ENCODE measurements at regions of chrX and their contacts with region 1.

Region 1: DNA sequence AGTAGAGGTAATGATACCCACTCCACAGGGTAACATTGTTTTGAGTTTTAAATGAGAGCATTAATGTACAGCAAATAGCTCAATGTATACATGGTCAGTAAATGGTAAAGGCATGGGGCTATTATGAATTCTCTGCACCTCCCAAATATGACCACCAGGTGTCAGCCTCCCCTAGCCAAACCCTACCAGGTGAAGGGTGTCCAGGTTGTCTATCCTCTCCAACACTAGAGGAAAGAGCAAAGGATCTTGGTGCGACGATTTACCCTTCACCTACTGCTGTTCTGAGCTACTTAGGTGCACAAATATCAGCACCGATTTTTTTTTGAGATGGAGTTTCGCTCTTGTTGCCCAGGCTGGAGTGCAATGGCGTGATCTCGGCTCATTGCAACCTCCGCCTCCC is 26.5 kb upstream of the XIAP start:
- DNase-seq: peak; percentile 5 to 66
- H3K4me3 ChIP-seq: no peak overlapping the region
- H3K27ac ChIP-seq: no peak overlapping the region
- H3K4me1 ChIP-seq: no peaks in the 10 kb centered on the region
- H3K27me3 ChIP-seq: no peaks in the 10 kb centered on the region
- CTCF ChIP-seq: peak; percentile 34 to 70 (median 65)
- EP300 ChIP-seq: no peak
- POLR2A ChIP-seq: no peak
- RAD21 ChIP-seq: peak; percentile 88 to 93

Region 2: DNA sequence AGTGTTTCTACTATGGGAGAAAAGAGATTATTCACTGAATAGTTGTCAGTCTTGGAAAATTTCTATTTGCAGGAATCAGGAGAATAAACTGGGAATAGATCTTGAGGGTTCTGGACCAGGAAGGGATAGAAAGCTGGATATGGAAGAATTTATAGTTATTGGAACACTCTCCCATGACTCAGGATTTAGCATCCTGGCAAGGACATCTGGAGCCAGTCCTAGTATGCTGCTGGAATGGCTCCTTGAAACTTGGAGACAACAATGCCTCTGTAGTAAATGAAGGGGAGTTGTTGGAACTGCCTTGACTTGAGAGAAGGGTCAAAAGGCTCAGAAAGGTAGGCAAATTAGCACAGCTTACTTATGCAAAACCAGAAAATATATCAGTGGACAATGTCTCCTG is 77.1 kb before region 1 on chrX:
- CTCF ChIA-PET with region 1: no interaction called
- POLR2A ChIA-PET with region 1: no interaction called
- DNase-seq: no peak
- H3K4me3 ChIP-seq: no peak overlapping the region
- H3K27ac ChIP-seq: no peak overlapping the region
- H3K4me1 ChIP-seq: no peaks in the 10 kb centered on the region
- H3K27me3 ChIP-seq: no peaks in the 10 kb centered on the region
- CTCF ChIP-seq: no peak
- EP300 ChIP-seq: no peak
- POLR2A ChIP-seq: no peak
- RAD21 ChIP-seq: no peak

Region 3: GRCh38 chrX:123822965-123823364 is 10.4 kb before region 1 on chrX:
- CTCF ChIA-PET with region 1: interaction called, 17 read pairs
- POLR2A ChIA-PET with region 1: no interaction called
- DNase-seq: no peak
- H3K4me3 ChIP-seq: no peak overlapping the region
- H3K27ac ChIP-seq: no peak overlapping the region
- H3K4me1 ChIP-seq: peaks cover 0 to 8% (median 3%) of the 10 kb centered on the region in 4 experiments; a peak in 3 of 7 replicates
- H3K27me3 ChIP-seq: no peaks in the 10 kb centered on the region
- CTCF ChIP-seq: no peak
- EP300 ChIP-seq: no peak
- POLR2A ChIP-seq: no peak
- RAD21 ChIP-seq: no peak

Region 4: GRCh38 chrX:123854329-123854728 is 20.9 kb after region 1 on chrX:
- CTCF ChIA-PET with region 1: interaction called, 10 read pairs
- POLR2A ChIA-PET with region 1: interaction called, 3 read pairs
- DNase-seq: no peak
- H3K4me3 ChIP-seq: no peak overlapping the region
- H3K27ac ChIP-seq: no peak overlapping the region
- H3K4me1 ChIP-seq: peaks cover 0 to 4% (median under 1%) of the 10 kb centered on the region in 4 experiments; a peak in 3 of 7 replicates
- H3K27me3 ChIP-seq: no peaks in the 10 kb centered on the region
- CTCF ChIP-seq: no peak
- EP300 ChIP-seq: no peak
- POLR2A ChIP-seq: no peak
- RAD21 ChIP-seq: no peak

Region 5: GRCh38 chrX:123884809-123885408 is 51.5 kb after region 1 on chrX:
- CTCF ChIA-PET with region 1: interaction called, 13 read pairs
- POLR2A ChIA-PET with region 1: no interaction called
- DNase-seq: no peak
- H3K4me3 ChIP-seq: no peak overlapping the region
- H3K27ac ChIP-seq: no peak overlapping the region
- H3K4me1 ChIP-seq: no peaks in the 10 kb centered on the region
- H3K27me3 ChIP-seq: no peaks in the 10 kb centered on the region
- CTCF ChIP-seq: peak in 2 of 3 experiments; percentile 15 to 30; a peak in 2 of 4 replicates
- EP300 ChIP-seq: no peak
- POLR2A ChIP-seq: no peak
- RAD21 ChIP-seq: peak; percentile 18 to 24; a peak in 2 of 4 replicates

Region 6: DNA sequence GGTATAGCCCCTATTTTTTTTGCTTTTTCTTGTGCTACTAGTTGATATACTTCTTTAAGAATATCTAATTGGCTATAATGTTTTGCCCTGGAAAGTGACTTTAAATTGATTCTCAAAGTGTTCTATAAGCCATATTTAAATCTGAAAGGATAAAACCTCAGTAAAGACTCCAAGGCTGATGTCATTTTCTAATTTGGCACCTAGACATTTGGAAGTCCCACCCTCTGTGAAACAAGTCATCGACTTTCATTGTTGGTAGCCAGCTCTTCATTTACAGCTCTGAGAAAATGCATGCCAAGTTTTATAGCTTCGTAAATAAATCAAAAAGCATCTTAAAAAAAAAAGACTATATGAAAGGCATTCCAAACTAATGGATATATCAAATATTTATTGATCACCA is 110.1 kb after region 1 on chrX:
- CTCF ChIA-PET with region 1: interaction called, 11 read pairs
- POLR2A ChIA-PET with region 1: no interaction called
- DNase-seq: no peak
- H3K4me3 ChIP-seq: no peak overlapping the region
- H3K27ac ChIP-seq: no peak overlapping the region
- H3K4me1 ChIP-seq: no peaks in the 10 kb centered on the region
- H3K27me3 ChIP-seq: no peaks in the 10 kb centered on the region
- CTCF ChIP-seq: no peak
- EP300 ChIP-seq: no peak
- POLR2A ChIP-seq: no peak
- RAD21 ChIP-seq: no peak